Heart left ventricle (tissue), 16 donors: ENCODE measurements at regions of chr14 and their contacts with region 1.

Region 1: DNA sequence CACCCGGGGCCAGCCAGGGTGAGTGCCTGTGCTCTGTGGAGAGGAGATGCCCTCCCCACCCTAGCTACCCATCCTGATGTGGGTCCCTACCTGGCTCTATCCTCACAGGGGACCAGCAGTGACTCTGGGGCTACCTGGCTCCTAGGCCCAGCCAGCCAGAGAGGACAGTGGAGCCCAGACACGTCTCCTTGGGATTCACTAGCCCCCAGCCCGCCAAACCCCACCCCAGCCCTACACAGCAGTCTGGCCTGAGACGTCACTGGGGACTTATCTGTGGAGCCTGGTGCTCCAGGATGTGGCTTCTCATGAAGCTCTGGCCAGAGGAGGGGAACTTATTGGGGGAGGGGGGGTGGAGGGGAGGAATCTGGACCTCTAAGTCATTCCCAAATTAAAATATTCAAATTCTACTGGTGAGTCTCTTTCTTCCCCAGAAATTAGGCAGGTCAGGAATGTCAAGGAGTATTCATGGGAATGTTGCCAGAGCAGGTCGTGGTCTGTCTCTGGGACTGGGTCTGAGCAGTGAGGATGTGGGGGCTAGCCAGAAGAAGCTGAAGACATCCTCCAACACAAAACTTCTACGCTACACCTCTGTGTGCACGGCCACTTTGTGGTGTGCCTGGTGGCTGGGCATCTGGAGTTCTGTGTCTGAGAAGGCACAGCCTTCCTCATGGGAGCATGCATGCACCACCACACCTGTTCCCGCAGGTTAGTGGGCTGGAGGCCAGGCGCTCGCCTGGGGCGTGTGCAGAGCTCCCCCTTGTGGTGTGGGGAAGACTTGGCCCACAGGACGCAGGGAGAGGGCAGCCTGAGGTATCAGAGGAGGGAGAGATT is 2.7 kb downstream of the CMTM5 start:
- DNase-seq: peak; percentile 44 to 81 (median 70)
- ATAC-seq: peak; percentile 13 to 39 (median 24)
- H3K4me3 ChIP-seq: no peak overlapping the region
- H3K27ac ChIP-seq: peak overlapping the region in 1 of 12 donors; percentile 18
- H3K4me1 ChIP-seq: peaks cover 0 to 14% (median 0%) of the 10 kb centered on the region in 12 donors
- H3K27me3 ChIP-seq: no peaks in the 10 kb centered on the region
- CTCF ChIP-seq: peak; percentile 77 to 90 (median 82)
- POLR2A ChIP-seq: peak in 1 of 2 donors; percentile 38

Region 2: DNA sequence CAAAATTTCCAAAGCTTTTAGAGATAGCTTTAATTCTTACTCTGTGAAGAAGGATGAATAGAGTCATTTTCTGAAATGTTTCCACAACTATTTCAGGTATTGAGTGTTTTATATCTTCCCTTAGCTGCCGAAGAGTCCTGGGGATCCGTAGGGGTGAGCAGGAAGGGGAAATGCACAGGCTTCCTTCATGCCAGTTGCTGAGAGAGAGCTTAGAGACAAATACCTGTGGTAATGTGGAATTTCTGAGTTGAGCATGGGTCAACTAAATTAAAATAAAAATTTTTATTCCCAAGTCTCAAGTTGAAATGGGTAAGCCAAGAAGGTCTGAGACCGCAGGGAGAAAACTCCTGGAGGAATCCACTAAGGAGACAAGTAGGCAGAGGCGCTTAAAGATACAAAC is 976.3 kb before region 1 on chr14:
- intact Hi-C with region 1: no loop called
- DNase-seq: no peak
- ATAC-seq: no peak
- H3K4me3 ChIP-seq: no peak overlapping the region
- H3K27ac ChIP-seq: no peak overlapping the region
- H3K4me1 ChIP-seq: peaks cover 0 to 14% (median 3%) of the 10 kb centered on the region in 12 donors
- H3K27me3 ChIP-seq: no peaks in the 10 kb centered on the region
- CTCF ChIP-seq: no peak
- POLR2A ChIP-seq: no peak

Region 3: GRCh38 chr14:23120541-23121251 is 258.9 kb before region 1 on chr14:
- intact Hi-C with region 1: loop called in 1 of 10 experiments (anchors 10 kb)
- DNase-seq: peak; percentile 88 to 94 (median 90)
- ATAC-seq: peak; percentile 75 to 86 (median 80)
- H3K4me3 ChIP-seq: no peak overlapping the region
- H3K27ac ChIP-seq: peak overlapping the region in 5 of 12 donors; percentile 10 to 79 (median 15)
- H3K4me1 ChIP-seq: peaks cover 0 to 31% (median 8%) of the 10 kb centered on the region in 12 donors
- H3K27me3 ChIP-seq: peaks cover 0 to 3% (median 0%) of the 10 kb centered on the region in 9 donors
- CTCF ChIP-seq: peak; percentile 99 to 100 (median 100)
- POLR2A ChIP-seq: no peak

Region 4: DNA sequence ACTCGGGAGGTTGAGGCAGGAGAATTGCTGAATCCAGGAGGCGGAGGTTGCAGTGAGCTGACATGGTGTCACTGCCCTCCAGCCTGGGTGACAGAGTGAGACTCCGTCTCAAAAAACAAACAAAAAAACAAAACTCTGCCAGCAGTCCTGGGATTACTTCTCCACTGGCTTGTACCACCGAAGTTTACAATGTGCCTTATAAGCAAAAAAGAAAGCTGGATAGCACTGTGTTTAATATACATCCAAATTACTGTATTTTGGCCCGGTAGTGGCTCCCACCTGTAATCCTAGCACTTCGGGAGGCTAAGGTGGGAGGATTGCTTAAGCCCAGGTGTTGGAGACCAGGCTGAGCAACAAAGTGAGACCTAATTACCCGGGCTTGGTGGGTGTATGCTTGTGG is 110.4 kb before region 1 on chr14:
- intact Hi-C with region 1: loop called (anchors 5 to 10 kb)
- DNase-seq: no peak
- ATAC-seq: no peak
- H3K4me3 ChIP-seq: no peak overlapping the region
- H3K27ac ChIP-seq: no peak overlapping the region
- H3K4me1 ChIP-seq: no peaks in the 10 kb centered on the region
- H3K27me3 ChIP-seq: no peaks in the 10 kb centered on the region
- CTCF ChIP-seq: no peak
- POLR2A ChIP-seq: no peak

Region 5: GRCh38 chr14:23275412-23275811 is 104.2 kb before region 1 on chr14:
- intact Hi-C with region 1: loop called in 1 of 10 experiments (anchors 5 kb)
- DNase-seq: no peak
- ATAC-seq: no peak
- H3K4me3 ChIP-seq: no peak overlapping the region
- H3K27ac ChIP-seq: no peak overlapping the region
- H3K4me1 ChIP-seq: peaks cover 0 to 8% (median 0%) of the 10 kb centered on the region in 12 donors
- H3K27me3 ChIP-seq: no peaks in the 10 kb centered on the region
- CTCF ChIP-seq: no peak
- POLR2A ChIP-seq: no peak

Region 6: DNA sequence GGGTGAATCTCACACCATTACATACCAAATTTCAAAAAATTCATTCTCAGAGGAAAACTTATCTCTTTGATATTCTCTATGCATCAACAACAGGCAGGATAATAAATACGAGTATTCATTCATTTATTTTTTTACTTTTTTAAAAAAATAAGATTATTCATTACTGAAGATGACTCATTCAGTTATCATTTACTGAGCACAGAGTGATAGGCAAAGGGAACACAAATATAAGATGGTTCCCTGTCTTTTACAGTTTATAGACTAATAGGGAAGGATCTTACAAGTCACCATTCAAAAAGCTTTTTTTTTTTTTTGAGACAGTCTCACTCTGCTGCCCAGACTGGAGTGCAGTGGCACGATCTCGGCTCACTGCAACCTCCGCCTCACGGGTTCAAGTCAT is 63.3 kb before region 1 on chr14:
- intact Hi-C with region 1: no loop called
- DNase-seq: no peak
- ATAC-seq: no peak
- H3K4me3 ChIP-seq: no peak overlapping the region
- H3K27ac ChIP-seq: no peak overlapping the region
- H3K4me1 ChIP-seq: peaks cover 0 to 8% (median 4%) of the 10 kb centered on the region in 12 donors
- H3K27me3 ChIP-seq: no peaks in the 10 kb centered on the region
- CTCF ChIP-seq: no peak
- POLR2A ChIP-seq: no peak

Region 7: GRCh38 chr14:23327947-23328744 is 51.4 kb before region 1 on chr14:
- intact Hi-C with region 1: loop called (anchors 1 to 5 kb)
- DNase-seq: peak in 4 of 5 donors; percentile 48 to 57 (median 56)
- ATAC-seq: peak in 3 of 4 donors; percentile 50 to 65 (median 61)
- H3K4me3 ChIP-seq: no peak overlapping the region
- H3K27ac ChIP-seq: peak overlapping the region in 1 of 12 donors; percentile 24
- H3K4me1 ChIP-seq: peaks cover 0 to 11% (median 3%) of the 10 kb centered on the region in 12 donors
- H3K27me3 ChIP-seq: no peaks in the 10 kb centered on the region
- CTCF ChIP-seq: peak; percentile 79 to 95 (median 88)
- POLR2A ChIP-seq: no peak

Region 8: DNA sequence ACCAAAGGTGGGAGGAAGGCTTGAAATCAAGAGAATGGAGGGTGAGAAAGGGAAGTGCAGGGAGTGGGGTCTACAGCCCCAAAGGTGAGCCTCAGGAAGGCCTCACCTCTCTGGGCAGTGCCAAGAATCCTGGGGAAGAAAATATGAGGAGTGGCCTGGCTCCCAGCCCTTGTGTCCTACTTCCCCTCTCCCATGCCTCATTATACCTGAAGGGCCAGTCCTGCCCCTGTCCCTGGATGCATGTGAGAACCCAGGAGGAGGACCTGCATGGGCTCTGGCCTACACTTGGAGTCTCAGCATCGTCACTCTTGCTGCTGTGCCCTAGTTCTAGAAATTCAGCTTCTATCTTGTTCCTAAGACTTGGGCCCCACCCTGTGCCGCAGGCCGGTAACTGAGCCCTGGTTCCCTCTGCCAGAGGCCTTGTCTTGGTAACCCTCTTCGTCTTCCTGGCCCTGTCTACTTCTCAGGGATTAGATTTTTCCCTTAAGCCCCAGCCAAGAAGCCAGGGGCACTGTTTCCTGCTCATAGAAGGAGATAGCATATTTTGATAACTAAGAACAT is 66.8 kb after region 1 on chr14:
- intact Hi-C with region 1: loop called in 4 of 10 experiments (anchors 5 to 10 kb)
- DNase-seq: no peak
- ATAC-seq: peak; percentile 10 to 47 (median 30)
- H3K4me3 ChIP-seq: no peak overlapping the region
- H3K27ac ChIP-seq: peak overlapping the region in 8 of 12 donors; percentile 6 to 97 (median 72)
- H3K4me1 ChIP-seq: peaks cover 0 to 41% (median 15%) of the 10 kb centered on the region in 12 donors
- H3K27me3 ChIP-seq: peaks cover 0 to 6% (median 0%) of the 10 kb centered on the region in 9 donors
- CTCF ChIP-seq: peak in 7 of 12 donors; percentile 21 to 51 (median 38)
- POLR2A ChIP-seq: no peak

Region 9: GRCh38 chr14:23454445-23454856 is 74.9 kb after region 1 on chr14:
- intact Hi-C with region 1: loop called in 4 of 10 experiments (anchors 5 to 10 kb)
- DNase-seq: no peak
- ATAC-seq: peak in 2 of 4 donors; percentile 21 to 55
- H3K4me3 ChIP-seq: no peak overlapping the region
- H3K27ac ChIP-seq: peak overlapping the region in 1 of 12 donors; percentile 13
- H3K4me1 ChIP-seq: peaks cover 0 to 6% (median 0%) of the 10 kb centered on the region in 12 donors
- H3K27me3 ChIP-seq: peaks cover 0 to 21% (median 0%) of the 10 kb centered on the region in 9 donors
- CTCF ChIP-seq: no peak
- POLR2A ChIP-seq: no peak